ENCODE measurements at regions of chr10 and their contacts with region 1.

Region 1: DNA sequence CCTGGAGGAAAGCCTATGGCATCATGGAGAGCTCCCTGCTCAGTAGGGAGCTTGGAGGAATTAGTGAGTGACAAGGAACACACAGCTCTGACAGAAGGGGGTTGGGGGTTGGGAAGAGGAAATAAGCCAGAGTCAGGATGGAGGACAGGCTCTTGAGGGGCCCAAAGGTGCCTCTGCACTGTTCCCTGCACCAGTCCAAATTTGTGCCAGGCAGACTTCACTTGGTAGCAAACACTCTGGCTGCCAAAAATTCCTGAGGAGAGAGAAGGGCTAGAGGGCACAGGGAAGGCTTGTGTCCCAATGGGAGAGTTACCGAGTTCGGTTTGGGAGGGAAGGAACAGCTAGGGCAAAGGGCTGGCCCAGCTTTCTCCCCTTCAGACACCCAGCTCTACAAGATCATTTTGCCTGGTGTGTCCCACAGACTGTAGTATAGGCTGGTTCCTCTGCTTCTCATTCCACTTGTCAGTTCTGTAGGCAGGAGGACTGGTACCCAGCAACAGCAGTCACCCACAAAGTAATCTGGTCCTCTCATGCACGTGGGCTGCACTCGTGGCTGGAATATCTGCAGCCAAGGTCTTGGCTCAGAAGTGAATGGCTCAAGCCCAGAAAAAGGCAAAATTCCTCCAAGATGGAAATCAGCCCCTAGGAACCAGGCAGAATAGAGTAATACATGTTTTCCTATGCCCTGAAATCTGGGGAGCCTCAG is 8.0 kb upstream of the KCNIP2 start:
- DNase-seq: no peak
- ATAC-seq: no peak
- H3K4me3 ChIP-seq: no peak overlapping the region
- H3K27ac ChIP-seq: no peak overlapping the region
- H3K4me1 ChIP-seq: no peaks in the 10 kb centered on the region
- H3K27me3 ChIP-seq: no peaks in the 10 kb centered on the region
- CTCF ChIP-seq: no peak

Region 2: GRCh38 chr10:101525848-101526247 is 325.7 kb before region 1 on chr10:
- CTCF ChIA-PET with region 1: no interaction called
- POLR2A ChIA-PET with region 1: no interaction called
- in situ Hi-C with region 1: no loop called
- intact Hi-C with region 1: no loop called
- DNase-seq: no peak
- ATAC-seq: no peak
- H3K4me3 ChIP-seq: no peak overlapping the region
- H3K27ac ChIP-seq: no peak overlapping the region
- H3K4me1 ChIP-seq: no peaks in the 10 kb centered on the region
- H3K27me3 ChIP-seq: no peaks in the 10 kb centered on the region
- CTCF ChIP-seq: no peak

Region 3: GRCh38 chr10:101803511-101803910 is 48.1 kb before region 1 on chr10:
- CTCF ChIA-PET with region 1: no interaction called
- POLR2A ChIA-PET with region 1: interaction called, 11 read pairs
- in situ Hi-C with region 1: no loop called
- intact Hi-C with region 1: no loop called
- DNase-seq: no peak
- ATAC-seq: no peak
- H3K4me3 ChIP-seq: no peak overlapping the region
- H3K27ac ChIP-seq: no peak overlapping the region
- H3K4me1 ChIP-seq: no peaks in the 10 kb centered on the region
- H3K27me3 ChIP-seq: no peaks in the 10 kb centered on the region
- CTCF ChIP-seq: no peak

Region 4: DNA sequence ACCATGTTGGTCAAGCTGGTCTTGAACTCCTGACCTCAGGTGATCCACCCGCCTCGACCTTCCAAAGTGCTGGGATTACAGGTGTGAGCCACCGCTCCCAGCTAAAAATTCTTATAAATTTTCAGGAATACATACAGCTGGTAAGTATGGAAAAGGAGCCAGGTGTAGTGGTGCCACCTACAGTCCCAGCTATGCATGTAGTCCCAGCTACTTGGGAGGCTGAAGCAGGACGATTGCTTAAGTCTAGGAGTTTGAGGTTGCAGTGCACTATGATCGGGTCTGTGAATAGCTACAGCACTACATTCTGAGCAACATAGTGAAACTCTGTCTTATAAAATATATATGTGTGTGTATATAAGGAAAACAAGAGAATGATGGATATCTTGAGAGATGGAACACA is 249.6 kb after region 1 on chr10:
- CTCF ChIA-PET with region 1: no interaction called
- POLR2A ChIA-PET with region 1: no interaction called
- in situ Hi-C with region 1: no loop called
- intact Hi-C with region 1: no loop called
- DNase-seq: no peak
- ATAC-seq: peak; percentile 71; the same call in 1 of the 2 replicates
- H3K4me3 ChIP-seq: no peak overlapping the region
- H3K27ac ChIP-seq: no peak overlapping the region
- H3K4me1 ChIP-seq: no peaks in the 10 kb centered on the region
- H3K27me3 ChIP-seq: no peaks in the 10 kb centered on the region
- CTCF ChIP-seq: no peak